Cardiac septum (tissue), 1 donor: ENCODE measurements at regions of chr6 and their contacts with region 1.

Region 1: GRCh38 chr6:127102299-127102698 is 16.2 kb upstream of the RSPO3 start:
- DNase-seq: no peak

Region 2: GRCh38 chr6:127255286-127255685 is 153.0 kb after region 1 on chr6:
- intact Hi-C with region 1: loop called (anchors 2 kb)
- DNase-seq: no peak

Region 3: DNA sequence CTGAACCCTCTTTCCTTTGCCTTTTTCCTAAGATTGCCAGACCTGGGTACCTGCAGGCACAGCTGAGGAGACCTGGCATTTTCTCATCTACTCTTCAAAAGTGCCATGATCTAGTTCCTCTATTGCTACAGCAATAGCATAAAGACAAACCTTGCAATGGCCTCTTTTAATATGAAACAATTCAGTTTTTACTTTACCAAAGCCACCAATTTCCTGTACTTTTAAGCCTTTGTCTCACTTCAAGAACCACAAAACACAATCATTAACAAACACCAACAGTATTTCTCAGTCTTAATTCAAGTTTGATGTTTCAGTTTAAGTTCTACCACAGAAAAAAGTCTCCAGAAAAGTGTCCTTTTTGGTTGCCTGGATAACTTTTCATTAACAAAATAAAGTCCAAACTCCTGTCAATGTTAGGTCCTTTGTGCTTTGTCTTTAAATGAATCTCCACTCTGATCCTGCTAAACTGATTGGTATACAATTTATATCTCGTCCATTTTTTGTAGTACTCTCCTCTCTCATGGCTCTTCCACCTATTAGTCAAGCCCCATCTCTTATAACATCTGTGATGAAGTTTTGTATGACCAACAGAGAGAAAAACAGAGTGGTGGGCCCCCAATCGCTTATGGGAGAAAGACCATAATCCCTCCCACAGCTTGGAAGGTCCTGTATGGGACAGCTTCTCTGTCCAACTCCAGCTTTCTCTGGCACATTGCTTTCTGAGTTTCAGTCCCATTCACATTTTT is 849.0 kb after region 1 on chr6:
- intact Hi-C with region 1: no loop called
- DNase-seq: no peak